AG04450 (cell line): ENCODE measurements at regions of chr20 and their contacts with region 1.

Region 1: GRCh38 chr20:7859356-7859802 is 80.9 kb downstream of the HAO1 start:
- DNase-seq: no peak
- H3K4me3 ChIP-seq: no peak overlapping the region
- H3K27ac ChIP-seq: no peak overlapping the region
- H3K27me3 ChIP-seq: no peaks in the 10 kb centered on the region
- CTCF ChIP-seq: peak; percentile 78

Region 2: GRCh38 chr20:6828794-6829423 is 1030.5 kb before region 1 on chr20:
- CTCF ChIA-PET with region 1: interaction called, 29 read pairs
- POLR2A ChIA-PET with region 1: no interaction called
- DNase-seq: peak; percentile 3
- H3K4me3 ChIP-seq: no peak overlapping the region
- H3K27ac ChIP-seq: no peak overlapping the region
- H3K27me3 ChIP-seq: no peaks in the 10 kb centered on the region
- CTCF ChIP-seq: peak; percentile 73

Region 3: GRCh38 chr20:7375905-7376304 is 483.5 kb before region 1 on chr20:
- CTCF ChIA-PET with region 1: interaction called, 11 read pairs
- POLR2A ChIA-PET with region 1: no interaction called
- DNase-seq: no peak
- H3K4me3 ChIP-seq: no peak overlapping the region
- H3K27ac ChIP-seq: no peak overlapping the region
- H3K27me3 ChIP-seq: no peaks in the 10 kb centered on the region
- CTCF ChIP-seq: peak; percentile 54

Region 4: GRCh38 chr20:7841971-7842310 is 17.4 kb before region 1 on chr20:
- CTCF ChIA-PET with region 1: interaction called, 25 read pairs
- POLR2A ChIA-PET with region 1: no interaction called
- DNase-seq: peak; percentile 51
- H3K4me3 ChIP-seq: no peak overlapping the region
- H3K27ac ChIP-seq: no peak overlapping the region
- H3K27me3 ChIP-seq: no peaks in the 10 kb centered on the region
- CTCF ChIP-seq: no peak

Region 5: DNA sequence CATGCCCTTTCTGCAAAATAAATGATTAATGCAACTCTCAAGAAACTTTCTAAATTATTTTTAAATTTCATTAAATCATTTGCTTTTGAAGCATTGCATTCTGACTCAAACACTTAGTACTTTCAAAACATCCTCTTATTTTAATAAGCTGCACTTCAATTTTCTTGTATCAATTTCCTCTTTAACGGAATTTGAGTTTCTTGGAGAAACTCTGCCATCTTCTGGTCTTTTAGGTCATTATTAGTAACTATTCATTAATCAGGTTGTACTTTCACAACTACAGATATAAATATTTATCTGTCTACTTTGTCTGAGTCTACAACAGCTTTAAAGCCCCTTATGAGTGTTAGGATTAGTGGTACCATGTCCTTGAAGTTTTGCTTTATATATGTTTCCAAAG is 130.0 kb after region 1 on chr20:
- CTCF ChIA-PET with region 1: no interaction called
- POLR2A ChIA-PET with region 1: no interaction called
- DNase-seq: no peak
- H3K4me3 ChIP-seq: no peak overlapping the region
- H3K27ac ChIP-seq: no peak overlapping the region
- H3K27me3 ChIP-seq: no peaks in the 10 kb centered on the region
- CTCF ChIP-seq: no peak